H1 (cell line): ENCODE measurements at regions of chr6 and their contacts with region 1.

Region 1: DNA sequence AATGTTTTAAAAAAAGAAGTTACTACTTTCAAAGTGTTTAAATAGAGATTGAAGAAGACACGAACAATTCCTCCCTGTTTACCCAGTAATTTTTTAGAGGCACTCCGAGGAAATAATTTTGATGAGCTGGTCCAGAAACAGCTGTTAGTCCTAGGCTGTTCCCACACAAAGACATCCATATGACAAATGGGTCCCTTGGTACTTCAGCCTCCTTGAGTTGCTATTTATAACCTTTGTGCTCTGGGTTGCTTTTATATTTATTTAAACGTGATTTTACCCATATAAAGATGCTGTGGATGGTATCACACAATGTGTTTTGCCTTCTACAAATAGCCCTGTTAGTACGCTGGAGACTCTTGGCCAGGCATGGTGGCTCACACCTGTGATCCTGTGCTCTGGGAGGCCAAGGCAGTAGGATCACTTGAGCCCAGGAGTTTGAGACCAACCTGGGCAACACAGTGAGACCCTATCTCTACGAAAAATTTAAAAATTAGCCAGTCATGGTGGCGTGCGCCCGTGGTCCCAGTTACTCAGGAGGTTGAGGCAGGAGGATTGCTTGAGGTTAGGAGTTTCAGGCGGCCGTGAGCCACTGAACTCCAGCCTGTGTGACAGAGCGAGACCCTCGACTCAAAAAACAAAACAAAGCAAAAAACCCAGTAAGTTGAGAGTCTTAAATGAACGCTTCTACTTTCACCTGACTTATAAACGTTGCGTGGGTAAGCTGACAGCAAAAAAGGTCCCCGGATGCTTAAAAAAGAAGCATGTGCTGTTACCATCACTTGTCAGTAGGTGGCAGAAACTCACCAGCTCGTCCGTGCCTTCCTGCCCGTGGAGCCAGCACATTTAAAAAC is 56.9 kb upstream of the ARMH2 start:
- DNase-seq: peak; percentile 41 to 59
- H3K4me3 ChIP-seq: no peak overlapping the region
- H3K27ac ChIP-seq: no peak overlapping the region
- H3K4me1 ChIP-seq: no peaks in the 10 kb centered on the region
- H3K27me3 ChIP-seq: no peaks in the 10 kb centered on the region
- CTCF ChIP-seq: peak; percentile 81 to 85 (median 83)
- EP300 ChIP-seq: no peak
- POLR2A ChIP-seq: no peak
- RAD21 ChIP-seq: peak; percentile 96 to 97

Region 2: GRCh38 chr6:24876499-24877465 is 21.2 kb after region 1 on chr6:
- CTCF ChIA-PET with region 1: interaction called, 25 read pairs
- POLR2A ChIA-PET with region 1: no interaction called
- DNase-seq: peak in 1 of 2 experiments; percentile 66
- H3K4me3 ChIP-seq: peak overlapping the region in 3 of 4 experiments; percentile 15 to 48 (median 21); a peak in 5 of 8 replicates
- H3K27ac ChIP-seq: peak overlapping the region; percentile 78
- H3K4me1 ChIP-seq: peaks cover 0 to 31% (median 16%) of the 10 kb centered on the region in 4 experiments; a peak in 6 of 7 replicates
- H3K27me3 ChIP-seq: no peaks in the 10 kb centered on the region
- CTCF ChIP-seq: no peak
- EP300 ChIP-seq: 0 out of 3 replicates have a peak, but pooled peaks of 1 of the 2 experiments have one; percentile 51
- POLR2A ChIP-seq: peak; percentile 66 to 83
- RAD21 ChIP-seq: peak in 1 of 2 experiments; percentile 34; a peak in 3 of 4 replicates

Region 3: GRCh38 chr6:25027221-25027916 is 171.7 kb after region 1 on chr6:
- CTCF ChIA-PET with region 1: interaction called, 11 read pairs
- POLR2A ChIA-PET with region 1: no interaction called
- DNase-seq: no peak
- H3K4me3 ChIP-seq: no peak overlapping the region
- H3K27ac ChIP-seq: no peak overlapping the region
- H3K4me1 ChIP-seq: peaks cover 0 to 9% (median 0%) of the 10 kb centered on the region in 4 experiments; a peak in 3 of 7 replicates
- H3K27me3 ChIP-seq: no peaks in the 10 kb centered on the region
- CTCF ChIP-seq: peak; percentile 31 to 40 (median 33); a peak in 3 of 4 replicates
- EP300 ChIP-seq: no peak
- POLR2A ChIP-seq: no peak
- RAD21 ChIP-seq: peak; percentile 29 to 42; a peak in 3 of 4 replicates

Region 4: DNA sequence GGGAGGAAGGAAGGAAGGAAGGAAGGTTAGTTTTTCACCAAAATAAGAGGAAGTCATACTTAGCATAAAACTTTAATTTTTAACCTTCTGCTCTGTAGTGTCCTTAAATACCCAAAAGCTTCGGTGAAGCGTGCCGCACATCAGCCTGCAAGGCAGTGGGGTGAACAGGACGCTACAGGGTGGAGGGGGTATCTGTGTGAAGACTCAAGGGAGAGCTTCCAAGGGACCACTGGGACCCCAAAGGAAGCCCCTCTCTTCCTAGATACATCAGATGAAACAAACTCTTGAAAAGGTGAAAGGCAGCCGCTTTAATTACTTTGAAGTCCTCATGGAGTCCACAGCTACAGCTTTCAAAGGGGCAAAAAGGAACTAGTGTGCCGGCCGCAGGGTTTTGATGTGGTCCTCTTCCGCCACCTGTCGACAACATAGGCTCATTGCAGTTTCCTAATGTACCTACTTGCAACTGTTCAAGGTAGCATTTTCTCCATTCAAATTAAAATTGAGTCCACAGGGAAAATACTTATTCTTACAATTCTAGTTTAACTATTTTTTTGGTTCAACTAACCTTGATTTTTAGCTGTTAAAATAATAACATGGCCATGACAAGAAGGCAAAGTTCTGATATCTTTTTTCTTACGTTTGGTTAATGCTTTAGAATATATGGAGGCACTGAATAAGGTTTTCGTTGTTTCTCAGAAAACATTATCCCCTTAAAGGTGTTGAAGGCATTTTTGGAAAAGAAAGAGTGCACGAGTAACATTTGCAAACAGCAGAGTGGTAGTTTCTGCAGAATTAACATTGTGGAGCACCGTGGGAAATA is 215.1 kb after region 1 on chr6:
- CTCF ChIA-PET with region 1: interaction called, 13 read pairs
- POLR2A ChIA-PET with region 1: no interaction called
- DNase-seq: peak; percentile 62 to 84
- H3K4me3 ChIP-seq: no peak overlapping the region
- H3K27ac ChIP-seq: no peak overlapping the region
- H3K4me1 ChIP-seq: no peaks in the 10 kb centered on the region; a peak in 1 of 7 replicates
- H3K27me3 ChIP-seq: no peaks in the 10 kb centered on the region
- CTCF ChIP-seq: peak; percentile 57 to 91 (median 74)
- EP300 ChIP-seq: no peak
- POLR2A ChIP-seq: no peak
- RAD21 ChIP-seq: peak; percentile 94 to 95